Endothelial cell of umbilical vein (primary cell): ENCODE measurements at regions of chr2 and their contacts with region 1.

Region 1: GRCh38 chr2:88919087-88919738 is 227.7 kb downstream of the RPIA start:
- DNase-seq: peak; percentile 29
- H3K4me3 ChIP-seq: no peak overlapping the region
- H3K27ac ChIP-seq: no peak overlapping the region
- H3K4me1 ChIP-seq: no peaks in the 10 kb centered on the region
- H3K27me3 ChIP-seq: peaks cover 5 to 13% of the 10 kb centered on the region in 2 experiments
- CTCF ChIP-seq: peak; percentile 46 to 49
- POLR2A ChIP-seq: no peak

Region 2: DNA sequence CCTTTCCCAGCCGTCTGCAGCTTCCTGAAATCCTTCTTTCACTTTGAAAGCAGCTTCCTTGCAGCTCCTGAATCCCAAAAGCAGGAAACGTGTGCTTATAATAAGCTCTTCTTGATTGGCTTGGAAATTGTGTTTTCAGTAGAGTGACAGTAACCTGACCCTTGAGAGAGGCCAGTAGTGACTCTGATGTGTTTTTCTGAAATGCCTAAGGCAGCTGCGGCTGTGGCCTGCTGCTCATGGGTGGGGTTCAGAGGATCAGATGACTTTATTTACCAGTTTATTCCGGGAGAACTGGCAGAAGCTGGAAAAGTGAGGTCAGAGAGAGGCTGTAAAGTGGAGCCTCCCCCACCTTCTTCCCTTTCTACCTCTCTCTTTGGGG is 259.7 kb before region 1 on chr2:
- CTCF ChIA-PET with region 1: no interaction called
- POLR2A ChIA-PET with region 1: no interaction called
- dilution Hi-C with region 1: no loop called
- intact Hi-C with region 1: no loop called
- DNase-seq: peak; percentile 88
- H3K4me3 ChIP-seq: peak overlapping the region in 1 of 3 experiments; percentile 4
- H3K27ac ChIP-seq: peak overlapping the region; percentile 37
- H3K4me1 ChIP-seq: peaks cover 11% of the 10 kb centered on the region
- H3K27me3 ChIP-seq: no peaks in the 10 kb centered on the region
- CTCF ChIP-seq: no peak
- POLR2A ChIP-seq: no peak

Region 3: GRCh38 chr2:88691339-88692183 is 227.7 kb before region 1 on chr2 and contains the start of gene RPIA:
- CTCF ChIA-PET with region 1: interaction called, 3 read pairs
- POLR2A ChIA-PET with region 1: no interaction called
- dilution Hi-C with region 1: no loop called
- intact Hi-C with region 1: loop called (anchors 5 kb)
- DNase-seq: peak; percentile 99
- H3K4me3 ChIP-seq: peak within 1 kb of the TSS; percentile 44 to 83 (median 73)
- H3K27ac ChIP-seq: peak within 1 kb of the TSS; percentile 59
- H3K4me1 ChIP-seq: peaks cover 13% of the 10 kb centered on the region
- H3K27me3 ChIP-seq: no peaks in the 10 kb centered on the region
- CTCF ChIP-seq: peak; percentile 71 to 76
- POLR2A ChIP-seq: peak; percentile 61
- total RNA-seq, gene RPIA: 29.8 and 30.3 TPM in 2 replicates

Region 4: GRCh38 chr2:88874063-88874657 is 45.1 kb before region 1 on chr2:
- CTCF ChIA-PET with region 1: interaction called, 9 read pairs
- POLR2A ChIA-PET with region 1: no interaction called
- dilution Hi-C with region 1: no loop called
- intact Hi-C with region 1: loop called (anchors 1 kb)
- DNase-seq: peak; percentile 77
- H3K4me3 ChIP-seq: peak overlapping the region in 1 of 3 experiments; percentile 45
- H3K27ac ChIP-seq: no peak overlapping the region
- H3K4me1 ChIP-seq: no peaks in the 10 kb centered on the region
- H3K27me3 ChIP-seq: peaks cover 10 to 32% of the 10 kb centered on the region in 2 experiments
- CTCF ChIP-seq: peak; percentile 57 to 62
- POLR2A ChIP-seq: no peak

Region 5: GRCh38 chr2:88903749-88904353 is 15.4 kb before region 1 on chr2:
- CTCF ChIA-PET with region 1: interaction called, 25 read pairs
- POLR2A ChIA-PET with region 1: no interaction called
- dilution Hi-C with region 1: no loop called
- intact Hi-C with region 1: no loop called
- DNase-seq: peak; percentile 32
- H3K4me3 ChIP-seq: no peak overlapping the region
- H3K27ac ChIP-seq: no peak overlapping the region
- H3K4me1 ChIP-seq: no peaks in the 10 kb centered on the region
- H3K27me3 ChIP-seq: peaks cover 2 to 11% of the 10 kb centered on the region in 2 experiments
- CTCF ChIP-seq: peak; percentile 49 to 63
- POLR2A ChIP-seq: no peak